H1 (cell line): ENCODE measurements at regions of chr14 and their contacts with region 1.

Region 1: GRCh38 chr14:74531467-74531866 is 37.9 kb downstream of the ISCA2 start:
- DNase-seq: peak; percentile 23 to 72
- H3K4me3 ChIP-seq: no peak overlapping the region
- H3K27ac ChIP-seq: no peak overlapping the region
- H3K4me1 ChIP-seq: no peaks in the 10 kb centered on the region; a peak in 2 of 7 replicates
- H3K27me3 ChIP-seq: no peaks in the 10 kb centered on the region
- CTCF ChIP-seq: peak; percentile 22 to 60 (median 50)
- EP300 ChIP-seq: no peak
- POLR2A ChIP-seq: no peak
- RAD21 ChIP-seq: peak; percentile 63 to 81

Region 2: GRCh38 chr14:74514471-74514941 is 17.0 kb before region 1 on chr14:
- CTCF ChIA-PET with region 1: interaction called, 49 read pairs
- POLR2A ChIA-PET with region 1: interaction called, 4 read pairs
- DNase-seq: no peak
- H3K4me3 ChIP-seq: no peak overlapping the region
- H3K27ac ChIP-seq: no peak overlapping the region
- H3K4me1 ChIP-seq: peaks cover 4 to 23% (median 11%) of the 10 kb centered on the region in 4 experiments
- H3K27me3 ChIP-seq: no peaks in the 10 kb centered on the region; a peak in 1 of 7 replicates
- CTCF ChIP-seq: no peak
- EP300 ChIP-seq: no peak
- POLR2A ChIP-seq: no peak
- RAD21 ChIP-seq: no peak